Naive thymus-derived CD4-positive, alpha-beta T cell (primary cell): ENCODE measurements at regions of chr5 and their contacts with region 1.

Region 1: GRCh38 chr5:90783460-90784333 is 225.1 kb downstream of the ADGRV1 start:
- DNase-seq: peak; percentile 27 to 72 (median 59)
- ATAC-seq: peak; percentile 82
- H3K4me3 ChIP-seq: no peak overlapping the region
- H3K4me3 Mint-ChIP-seq: no peak overlapping the region
- H3K27ac ChIP-seq: no peak overlapping the region
- H3K27ac Mint-ChIP-seq: no peak overlapping the region
- H3K4me1 ChIP-seq: no peaks in the 10 kb centered on the region
- H3K4me1 Mint-ChIP-seq: peaks cover 0 to 2% (median 0%) of the 10 kb centered on the region in 7 donors
- H3K27me3 ChIP-seq: no peaks in the 10 kb centered on the region
- H3K27me3 Mint-ChIP-seq: peaks cover 11 to 23% (median 16%) of the 10 kb centered on the region in 5 donors

Region 2: GRCh38 chr5:90264689-90265544 is 518.8 kb before region 1 on chr5:
- CTCF ChIA-PET with region 1: no interaction called
- POLR2A ChIA-PET with region 1: no interaction called
- intact Hi-C with region 1: loop called (anchors 5 to 10 kb)
- DNase-seq: peak; percentile 0 to 46 (median 30)
- ATAC-seq: peak; percentile 59
- H3K4me3 ChIP-seq: no peak overlapping the region
- H3K4me3 Mint-ChIP-seq: no peak overlapping the region
- H3K27ac ChIP-seq: no peak overlapping the region
- H3K27ac Mint-ChIP-seq: no peak overlapping the region
- H3K4me1 ChIP-seq: no peaks in the 10 kb centered on the region
- H3K4me1 Mint-ChIP-seq: peaks cover 0 to 3% (median 0%) of the 10 kb centered on the region in 7 donors
- H3K27me3 ChIP-seq: no peaks in the 10 kb centered on the region
- H3K27me3 Mint-ChIP-seq: peaks cover 0 to 4% (median 0%) of the 10 kb centered on the region in 5 donors

Region 3: GRCh38 chr5:90386099-90386710 is 397.5 kb before region 1 on chr5:
- CTCF ChIA-PET with region 1: no interaction called
- POLR2A ChIA-PET with region 1: no interaction called
- intact Hi-C with region 1: loop called in 1 of 2 experiments (anchors 1 kb)
- DNase-seq: peak in 3 of 9 donors; percentile 2 to 12 (median 10)
- ATAC-seq: no peak
- H3K4me3 ChIP-seq: no peak overlapping the region
- H3K4me3 Mint-ChIP-seq: no peak overlapping the region
- H3K27ac ChIP-seq: no peak overlapping the region
- H3K27ac Mint-ChIP-seq: no peak overlapping the region
- H3K4me1 ChIP-seq: no peaks in the 10 kb centered on the region
- H3K4me1 Mint-ChIP-seq: peaks cover 0 to 16% (median 9%) of the 10 kb centered on the region in 7 donors
- H3K27me3 ChIP-seq: no peaks in the 10 kb centered on the region
- H3K27me3 Mint-ChIP-seq: peaks cover 0 to 11% (median 4%) of the 10 kb centered on the region in 5 donors

Region 4: GRCh38 chr5:90709323-90710155 is 74.2 kb before region 1 on chr5:
- CTCF ChIA-PET with region 1: no interaction called
- POLR2A ChIA-PET with region 1: no interaction called
- intact Hi-C with region 1: loop called (anchors 1 to 5 kb)
- DNase-seq: no peak
- ATAC-seq: no peak
- H3K4me3 ChIP-seq: no peak overlapping the region
- H3K4me3 Mint-ChIP-seq: no peak overlapping the region
- H3K27ac ChIP-seq: no peak overlapping the region
- H3K27ac Mint-ChIP-seq: no peak overlapping the region
- H3K4me1 ChIP-seq: no peaks in the 10 kb centered on the region
- H3K4me1 Mint-ChIP-seq: no peaks in the 10 kb centered on the region
- H3K27me3 ChIP-seq: no peaks in the 10 kb centered on the region
- H3K27me3 Mint-ChIP-seq: peaks cover 2 to 21% (median 14%) of the 10 kb centered on the region in 5 donors